HEK293 (cell line): ENCODE measurements at regions of chr14 and their contacts with region 1.

Region 1: GRCh38 chr14:77067632-77068514 is 30.2 kb upstream of the CIPC start:
- H3K4me3 ChIP-seq: no peak overlapping the region
- H3K27ac ChIP-seq: no peak overlapping the region
- H3K4me1 ChIP-seq: no peaks in the 10 kb centered on the region
- CTCF ChIP-seq: peak; percentile 76

Region 2: GRCh38 chr14:76887196-76887595 is 180.7 kb before region 1 on chr14:
- CTCF ChIA-PET with region 1: interaction called, 12 read pairs
- POLR2A ChIA-PET with region 1: no interaction called
- H3K4me3 ChIP-seq: no peak overlapping the region
- H3K27ac ChIP-seq: no peak overlapping the region
- H3K4me1 ChIP-seq: no peaks in the 10 kb centered on the region
- CTCF ChIP-seq: no peak

Region 3: GRCh38 chr14:76911473-76911872 is 156.4 kb before region 1 on chr14:
- CTCF ChIA-PET with region 1: interaction called, 59 read pairs
- POLR2A ChIA-PET with region 1: no interaction called
- H3K4me3 ChIP-seq: no peak overlapping the region
- H3K27ac ChIP-seq: no peak overlapping the region
- H3K4me1 ChIP-seq: no peaks in the 10 kb centered on the region
- CTCF ChIP-seq: no peak

Region 4: DNA sequence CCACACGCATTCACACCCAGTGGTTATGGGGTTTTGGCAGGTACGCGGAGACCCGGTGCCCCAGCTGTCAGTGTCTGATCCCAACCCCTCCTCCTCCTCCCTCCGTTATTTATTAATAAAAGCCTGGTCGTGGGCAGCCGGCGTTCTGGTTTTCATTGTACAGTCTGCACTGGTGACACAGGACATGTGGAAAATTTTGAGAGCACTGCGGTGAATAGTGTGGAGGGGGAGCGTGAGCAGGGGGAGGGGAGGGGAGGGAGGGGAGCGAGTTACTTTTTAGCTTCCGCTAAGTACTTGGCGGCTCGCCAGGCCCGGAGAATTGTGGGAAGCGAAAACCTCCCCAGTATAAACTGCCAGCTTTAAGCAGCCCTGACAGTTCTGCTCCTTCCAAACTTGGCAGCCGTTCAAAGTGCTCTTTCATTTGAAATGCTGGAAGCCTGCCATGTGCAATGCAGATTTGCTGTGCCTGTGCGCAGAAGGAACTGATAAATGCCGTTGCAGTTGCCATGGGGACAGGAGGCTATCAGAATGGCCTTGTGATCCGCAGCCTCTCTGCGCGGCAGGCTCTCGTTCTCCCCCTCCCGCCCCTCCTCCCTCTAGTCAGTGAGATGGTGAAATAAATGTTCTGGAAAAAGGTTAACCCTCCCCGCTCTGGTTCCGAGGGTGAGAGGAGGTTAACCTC is 27.7 kb before region 1 on chr14:
- CTCF ChIA-PET with region 1: interaction called, 15 read pairs
- POLR2A ChIA-PET with region 1: interaction called, 7 read pairs
- H3K4me3 ChIP-seq: peak overlapping the region; percentile 29
- H3K27ac ChIP-seq: peak overlapping the region; percentile 97
- H3K4me1 ChIP-seq: peaks cover 69% of the 10 kb centered on the region
- CTCF ChIP-seq: no peak

Region 5: GRCh38 chr14:77053046-77053841 is 14.6 kb before region 1 on chr14:
- CTCF ChIA-PET with region 1: interaction called, 63 read pairs
- POLR2A ChIA-PET with region 1: no interaction called
- H3K4me3 ChIP-seq: no peak overlapping the region
- H3K27ac ChIP-seq: peak overlapping the region; percentile 20; the same call in 1 of the 2 replicates
- H3K4me1 ChIP-seq: peaks cover 4% of the 10 kb centered on the region; the same call in 1 of the 2 replicates
- CTCF ChIP-seq: peak; percentile 87

Region 6: GRCh38 chr14:77086017-77086736 is 18.3 kb after region 1 on chr14:
- CTCF ChIA-PET with region 1: interaction called, 14 read pairs
- POLR2A ChIA-PET with region 1: no interaction called
- H3K4me3 ChIP-seq: no peak overlapping the region
- H3K27ac ChIP-seq: no peak overlapping the region
- H3K4me1 ChIP-seq: no peaks in the 10 kb centered on the region; the same call in 1 of the 2 replicates
- CTCF ChIP-seq: no peak

Region 7: DNA sequence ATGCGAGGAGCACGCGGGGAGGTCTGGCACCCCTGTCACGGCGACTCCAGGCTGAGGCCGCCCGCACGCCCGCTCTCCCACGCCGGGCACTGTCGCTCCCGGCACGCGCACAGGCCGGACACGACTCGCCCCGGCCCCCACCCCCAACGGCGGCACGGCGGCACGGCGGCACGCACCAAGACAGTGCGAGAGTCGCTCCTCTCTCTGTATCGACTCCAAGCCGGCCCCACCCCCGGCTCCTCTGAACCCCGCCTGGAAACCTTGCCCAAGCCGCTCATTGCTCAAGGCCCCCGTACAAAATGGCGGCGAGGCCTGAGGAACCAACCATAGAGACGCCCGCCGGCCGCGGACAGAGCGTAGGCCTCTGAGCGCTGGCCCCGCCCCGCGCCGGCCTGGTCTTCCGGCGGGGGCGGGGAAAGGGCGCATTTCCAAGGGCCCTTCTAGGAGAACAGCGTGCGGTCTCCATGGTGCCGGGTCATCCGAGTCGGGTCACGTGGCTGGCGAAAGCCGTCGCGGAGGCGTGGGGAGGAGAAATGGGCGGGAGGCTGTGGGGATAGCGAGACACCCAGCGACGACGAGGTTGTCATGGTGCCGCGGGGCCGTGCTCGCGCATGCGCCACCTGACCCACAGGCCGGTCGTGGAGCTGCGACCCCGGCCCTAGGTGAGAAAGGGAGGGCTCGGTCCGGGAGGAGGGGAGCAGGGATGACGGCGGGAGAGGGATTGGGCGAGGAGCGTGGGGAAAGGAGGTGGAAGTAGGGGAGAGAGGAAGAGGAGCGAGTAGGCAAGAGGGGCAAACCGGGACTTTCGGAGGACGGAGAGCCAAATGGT is 30.0 kb after region 1 on chr14 and contains the start of gene CIPC:
- CTCF ChIA-PET with region 1: interaction called, 53 read pairs
- POLR2A ChIA-PET with region 1: no interaction called
- H3K4me3 ChIP-seq: peak within 1 kb of the TSS; percentile 88
- H3K27ac ChIP-seq: peak within 1 kb of the TSS; percentile 87
- H3K4me1 ChIP-seq: peaks cover 18% of the 10 kb centered on the region
- CTCF ChIP-seq: peak; percentile 41; the same call in 1 of the 2 replicates

Region 8: DNA sequence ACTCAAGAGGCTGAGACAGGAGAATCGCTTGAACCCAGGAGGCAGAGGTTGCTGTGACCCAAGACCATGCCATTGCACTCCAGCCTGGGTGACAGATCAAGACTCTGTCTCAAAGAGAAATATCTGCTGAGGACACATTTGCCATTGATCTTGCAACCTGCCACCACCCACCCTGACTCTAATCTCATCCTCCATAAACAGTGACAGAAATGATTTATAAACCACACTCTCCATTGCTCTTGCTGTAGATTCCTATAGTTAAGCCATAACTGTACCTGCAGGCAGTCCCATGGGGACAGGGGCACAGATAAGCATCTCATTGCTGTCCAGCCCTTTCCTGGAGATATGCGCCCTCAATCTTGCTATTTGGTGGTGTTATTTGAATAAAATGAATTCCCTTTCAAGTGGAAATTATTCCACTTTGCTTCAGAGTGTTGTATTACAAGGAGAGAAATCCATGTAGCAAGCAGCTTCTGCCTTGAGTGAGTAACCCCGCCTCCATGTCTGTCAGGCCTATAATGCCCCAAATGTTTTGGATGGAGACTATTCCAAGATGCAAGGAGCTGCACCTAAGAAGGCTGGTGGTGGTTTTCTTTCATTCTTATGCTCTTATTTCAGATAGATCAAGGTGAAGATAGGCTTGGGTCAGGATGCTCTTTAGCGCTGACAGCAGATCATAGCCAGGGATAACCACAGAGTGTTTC is 76.7 kb after region 1 on chr14:
- CTCF ChIA-PET with region 1: no interaction called
- POLR2A ChIA-PET with region 1: no interaction called
- H3K4me3 ChIP-seq: no peak overlapping the region
- H3K27ac ChIP-seq: no peak overlapping the region
- H3K4me1 ChIP-seq: no peaks in the 10 kb centered on the region; the same call in 1 of the 2 replicates
- CTCF ChIP-seq: no peak

Region 9: GRCh38 chr14:77353469-77354141 is 285.7 kb after region 1 on chr14:
- CTCF ChIA-PET with region 1: no interaction called
- POLR2A ChIA-PET with region 1: no interaction called
- H3K4me3 ChIP-seq: no peak overlapping the region
- H3K27ac ChIP-seq: no peak overlapping the region
- H3K4me1 ChIP-seq: no peaks in the 10 kb centered on the region
- CTCF ChIP-seq: no peak